GM12878 (cell line): ENCODE measurements at regions of chr15 and their contacts with region 1.

Region 1: DNA sequence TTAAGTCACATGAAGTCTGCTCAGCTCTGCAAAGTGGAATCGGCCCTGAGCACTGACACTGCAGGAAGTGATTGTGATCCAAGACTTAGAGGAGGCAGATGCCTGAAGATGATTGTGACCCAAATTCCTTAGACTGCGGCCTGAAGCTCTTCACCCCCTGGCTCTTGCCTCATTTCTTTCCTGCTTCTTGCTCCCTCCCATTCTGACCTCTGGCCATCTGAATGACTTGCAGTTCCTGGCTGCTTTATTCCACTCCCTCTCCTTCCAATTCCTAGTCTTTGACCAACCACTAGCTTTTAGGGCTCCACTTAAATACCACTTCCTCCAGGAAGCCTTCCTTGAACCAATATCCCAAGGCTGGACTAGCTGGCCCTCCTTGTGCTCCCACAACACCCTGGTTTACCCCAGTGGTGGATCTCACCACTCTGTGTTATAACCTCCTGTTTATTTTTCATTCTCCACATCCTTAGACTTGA is 9.9 kb upstream of the EPB42 start:
- DNase-seq: no peak
- ATAC-seq: no peak
- H3K4me3 ChIP-seq: no peak overlapping the region
- H3K27ac ChIP-seq: no peak overlapping the region
- H3K4me1 ChIP-seq: no peaks in the 10 kb centered on the region
- H3K27me3 ChIP-seq: no peaks in the 10 kb centered on the region
- CTCF ChIP-seq: no peak
- EP300 ChIP-seq: no peak
- POLR2A ChIP-seq: no peak
- RAD21 ChIP-seq: no peak

Region 2: GRCh38 chr15:42920519-42921227 is 310.0 kb before region 1 on chr15 and contains the start of gene TTBK2:
- CTCF ChIA-PET with region 1: no interaction called
- POLR2A ChIA-PET with region 1: no interaction called
- RAD21 ChIA-PET with region 1: no interaction called
- SMC1A ChIA-PET with region 1: no interaction called
- in situ Hi-C with region 1: no loop called
- intact Hi-C with region 1: no loop called
- DNase-seq: peak; percentile 95
- ATAC-seq: peak; percentile 98
- H3K4me3 ChIP-seq: peak within 1 kb of the TSS; percentile 80
- H3K27ac ChIP-seq: peak within 1 kb of the TSS; percentile 64
- H3K4me1 ChIP-seq: peaks cover 12% of the 10 kb centered on the region
- H3K27me3 ChIP-seq: no peaks in the 10 kb centered on the region
- CTCF ChIP-seq: no peak
- EP300 ChIP-seq: no peak
- POLR2A ChIP-seq: peak; percentile 87
- RAD21 ChIP-seq: no peak
- polyA plus RNA-seq, gene TTBK2: 0.66 to 0.82 TPM

Region 3: GRCh38 chr15:43268111-43269105 is 37.7 kb after region 1 on chr15:
- CTCF ChIA-PET with region 1: interaction called, 518 read pairs
- POLR2A ChIA-PET with region 1: interaction called, 8 read pairs
- RAD21 ChIA-PET with region 1: interaction called, 255 read pairs
- SMC1A ChIA-PET with region 1: interaction called, 311 read pairs
- in situ Hi-C with region 1: no loop called
- intact Hi-C with region 1: loop called (anchors 1 kb)
- DNase-seq: no peak
- ATAC-seq: peak; percentile 90
- H3K4me3 ChIP-seq: no peak overlapping the region
- H3K27ac ChIP-seq: no peak overlapping the region
- H3K4me1 ChIP-seq: no peaks in the 10 kb centered on the region
- H3K27me3 ChIP-seq: no peaks in the 10 kb centered on the region
- CTCF ChIP-seq: peak; percentile 32 to 88 (median 64); a peak in 5 of 6 replicates
- EP300 ChIP-seq: no peak
- POLR2A ChIP-seq: no peak
- RAD21 ChIP-seq: peak; percentile 88